ENCODE measurements at regions of chr9 and their contacts with region 1.

Region 1: GRCh38 chr9:126389992-126390391 is 63.4 kb downstream of the MVB12B start:
- DNase-seq: no peak
- ATAC-seq: peak in 3 of 4 donors; percentile 45 to 56 (median 52)
- H3K4me3 ChIP-seq: no peak overlapping the region
- H3K27ac ChIP-seq: peak overlapping the region in 2 of 12 donors; percentile 25 to 89
- H3K4me1 ChIP-seq: peaks cover 0 to 49% (median 20%) of the 10 kb centered on the region in 12 donors
- H3K27me3 ChIP-seq: no peaks in the 10 kb centered on the region
- CTCF ChIP-seq: no peak
- POLR2A ChIP-seq: no peak

Region 2: DNA sequence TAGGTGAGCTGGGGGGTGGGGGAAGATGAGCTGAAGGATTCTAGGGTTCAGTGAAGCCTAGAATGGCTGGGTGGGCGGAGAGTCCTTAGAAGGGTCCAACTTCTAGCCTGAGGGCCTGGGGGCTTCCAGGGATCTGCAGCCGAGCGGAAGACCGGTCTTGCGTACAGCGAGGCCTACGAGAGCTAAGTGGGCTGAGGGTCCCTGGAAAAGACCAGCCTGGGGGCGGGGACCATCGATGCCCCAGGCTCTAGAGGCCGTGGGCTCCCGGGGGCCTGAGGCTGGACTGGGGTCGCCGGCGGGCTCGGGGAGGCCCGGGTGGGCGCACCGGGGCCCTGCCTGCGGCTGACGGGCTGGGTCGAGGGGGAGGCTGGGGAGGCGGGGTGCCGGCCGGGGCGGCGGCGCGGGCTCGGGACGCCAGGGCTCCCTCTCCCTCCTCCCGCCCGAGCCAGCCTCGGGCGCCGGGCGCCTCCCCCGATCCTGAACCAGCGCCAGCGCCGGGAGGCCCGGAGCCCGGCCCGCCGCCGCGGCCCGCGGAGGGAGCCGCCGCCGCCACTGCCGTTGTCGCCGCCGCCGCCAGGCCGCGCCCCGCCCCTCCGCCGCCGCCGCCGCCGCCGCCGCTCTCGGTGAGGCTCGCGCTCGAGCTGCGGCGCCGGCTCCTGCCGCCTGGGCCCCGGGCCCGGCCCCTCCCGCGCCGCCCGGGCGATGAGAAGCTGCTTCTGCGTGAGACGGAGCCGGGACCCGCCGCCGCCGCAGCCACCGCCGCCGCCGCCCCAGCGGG is 63.6 kb before region 1 on chr9 and contains the start of gene MVB12B:
- intact Hi-C with region 1: loop called in 3 of 10 experiments (anchors 5 kb)
- DNase-seq: peak; percentile 41 to 82 (median 49)
- ATAC-seq: peak in 3 of 4 donors; percentile 31 to 75 (median 68)
- H3K4me3 ChIP-seq: peak within 1 kb of the TSS; percentile 57 to 90 (median 70)
- H3K27ac ChIP-seq: peak within 1 kb of the TSS; percentile 23 to 85 (median 78)
- H3K4me1 ChIP-seq: peaks cover 0 to 42% (median 16%) of the 10 kb centered on the region in 12 donors
- H3K27me3 ChIP-seq: no peaks in the 10 kb centered on the region
- CTCF ChIP-seq: no peak
- POLR2A ChIP-seq: no peak
- total RNA-seq, gene MVB12B: 8.2 to 16.2 (median 11.6) TPM

Region 3: DNA sequence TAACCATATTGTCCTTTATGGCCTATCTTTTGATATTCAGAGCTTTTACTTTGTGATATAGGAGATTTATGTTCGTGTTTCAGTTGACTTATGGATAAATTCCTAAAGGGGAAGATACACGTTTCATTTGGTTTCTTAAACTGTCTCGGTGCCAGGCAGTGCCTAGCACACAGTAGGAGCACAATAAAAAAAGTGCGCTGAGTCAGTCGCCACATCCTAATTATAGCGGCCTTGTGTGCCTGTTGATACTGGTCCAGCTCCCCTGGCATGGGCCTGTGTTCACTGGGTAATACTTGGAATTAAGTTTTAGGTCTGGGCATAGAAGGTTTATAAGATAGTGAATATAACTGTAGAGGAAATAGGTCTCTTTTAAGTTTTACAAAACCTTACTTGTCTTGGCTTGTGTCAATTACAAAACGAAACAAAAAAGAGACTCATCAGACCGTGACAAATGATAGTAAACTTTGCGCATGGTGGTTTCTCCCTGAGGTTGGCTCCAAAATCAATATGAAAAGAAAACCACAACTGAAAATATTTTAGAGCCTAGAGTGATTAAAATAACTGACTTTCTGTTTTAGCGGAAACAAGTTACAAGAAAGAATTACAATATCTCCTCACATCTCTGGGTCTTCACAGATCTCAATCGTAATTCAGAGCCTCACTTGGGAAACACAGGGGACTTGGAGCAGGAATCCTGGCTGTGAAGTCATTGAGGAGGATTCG is 21.4 kb after region 1 on chr9:
- intact Hi-C with region 1: no loop called
- DNase-seq: no peak
- ATAC-seq: no peak
- H3K4me3 ChIP-seq: no peak overlapping the region
- H3K27ac ChIP-seq: peak overlapping the region in 1 of 12 donors; percentile 64
- H3K4me1 ChIP-seq: peaks cover 0 to 30% (median 9%) of the 10 kb centered on the region in 12 donors
- H3K27me3 ChIP-seq: no peaks in the 10 kb centered on the region
- CTCF ChIP-seq: no peak
- POLR2A ChIP-seq: no peak